Naive thymus-derived CD8-positive, alpha-beta T cell (primary cell): ENCODE measurements at regions of chr18 and their contacts with region 1.

Region 1: GRCh38 chr18:54269893-54270844 is 852 bp downstream of the POLI start:
- DNase-seq: peak in 6 of 10 donors; percentile 21 to 66 (median 36)
- ATAC-seq: peak; percentile 7 to 27
- H3K4me3 Mint-ChIP-seq: peak overlapping the region; percentile 87 to 97 (median 95)
- H3K27ac Mint-ChIP-seq: peak overlapping the region; percentile 94 to 99 (median 97)
- H3K4me1 Mint-ChIP-seq: peaks cover 7 to 34% (median 23%) of the 10 kb centered on the region in 4 donors
- H3K27me3 Mint-ChIP-seq: no peaks in the 10 kb centered on the region

Region 2: GRCh38 chr18:54224379-54225014 is 45.7 kb before region 1 on chr18 and contains the start of gene MBD2:
- POLR2A ChIA-PET with region 1: interaction called, 52 read pairs
- DNase-seq: peak; percentile 84 to 95 (median 92)
- ATAC-seq: peak; percentile 88 to 89
- H3K4me3 Mint-ChIP-seq: peak within 1 kb of the TSS; percentile 89 to 98 (median 94)
- H3K27ac Mint-ChIP-seq: peak within 1 kb of the TSS; percentile 92 to 98 (median 96)
- H3K4me1 Mint-ChIP-seq: peaks cover 8 to 42% (median 39%) of the 10 kb centered on the region in 4 donors
- H3K27me3 Mint-ChIP-seq: no peaks in the 10 kb centered on the region
- polyA plus RNA-seq, gene MBD2: 6.3 to 21.1 (median 13.0) TPM

Region 3: DNA sequence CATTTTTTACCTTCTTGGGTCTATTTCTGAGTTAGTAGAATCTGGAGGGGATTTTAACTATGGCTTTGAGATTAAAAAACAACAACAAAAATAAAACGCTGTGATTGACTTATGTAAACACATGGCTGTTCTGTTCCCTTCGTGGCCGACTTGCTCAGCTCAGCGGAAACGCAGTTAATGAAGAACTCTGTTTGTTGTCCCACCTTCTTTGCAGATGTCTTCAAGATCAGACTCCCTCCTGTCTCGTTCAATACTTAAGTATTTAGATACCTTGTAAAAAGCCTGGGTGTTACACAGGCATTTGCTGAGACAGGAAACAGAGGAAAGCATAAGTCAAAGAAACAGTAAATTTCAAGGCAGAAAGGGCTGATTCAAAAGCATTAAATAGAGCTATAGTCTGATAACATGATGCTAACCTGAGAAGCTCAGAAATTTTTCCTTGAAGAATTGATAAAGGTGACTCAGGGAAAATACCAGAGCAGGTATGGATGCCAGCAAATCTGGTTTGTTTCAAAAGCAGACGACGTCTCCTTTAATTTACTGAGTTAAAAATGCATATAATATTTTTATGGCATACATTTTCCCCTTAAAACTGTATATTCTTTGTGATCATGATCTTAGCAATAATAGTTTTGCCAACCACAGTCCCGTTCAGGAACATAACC is 22.5 kb before region 1 on chr18:
- POLR2A ChIA-PET with region 1: interaction called, 15 read pairs
- DNase-seq: no peak
- ATAC-seq: peak; percentile 39 to 48
- H3K4me3 Mint-ChIP-seq: peak overlapping the region; percentile 26 to 78 (median 52)
- H3K27ac Mint-ChIP-seq: peak overlapping the region; percentile 85 to 96 (median 92)
- H3K4me1 Mint-ChIP-seq: peaks cover 7 to 41% (median 15%) of the 10 kb centered on the region in 4 donors
- H3K27me3 Mint-ChIP-seq: no peaks in the 10 kb centered on the region

Region 4: GRCh38 chr18:54284981-54285785 is 15.0 kb after region 1 on chr18:
- POLR2A ChIA-PET with region 1: no interaction called
- DNase-seq: no peak
- ATAC-seq: no peak
- H3K4me3 Mint-ChIP-seq: no peak overlapping the region
- H3K27ac Mint-ChIP-seq: peak overlapping the region in 3 of 10 donors; percentile 2 to 51 (median 31)
- H3K4me1 Mint-ChIP-seq: peaks cover 0 to 2% (median under 1%) of the 10 kb centered on the region in 4 donors
- H3K27me3 Mint-ChIP-seq: no peaks in the 10 kb centered on the region

Region 5: DNA sequence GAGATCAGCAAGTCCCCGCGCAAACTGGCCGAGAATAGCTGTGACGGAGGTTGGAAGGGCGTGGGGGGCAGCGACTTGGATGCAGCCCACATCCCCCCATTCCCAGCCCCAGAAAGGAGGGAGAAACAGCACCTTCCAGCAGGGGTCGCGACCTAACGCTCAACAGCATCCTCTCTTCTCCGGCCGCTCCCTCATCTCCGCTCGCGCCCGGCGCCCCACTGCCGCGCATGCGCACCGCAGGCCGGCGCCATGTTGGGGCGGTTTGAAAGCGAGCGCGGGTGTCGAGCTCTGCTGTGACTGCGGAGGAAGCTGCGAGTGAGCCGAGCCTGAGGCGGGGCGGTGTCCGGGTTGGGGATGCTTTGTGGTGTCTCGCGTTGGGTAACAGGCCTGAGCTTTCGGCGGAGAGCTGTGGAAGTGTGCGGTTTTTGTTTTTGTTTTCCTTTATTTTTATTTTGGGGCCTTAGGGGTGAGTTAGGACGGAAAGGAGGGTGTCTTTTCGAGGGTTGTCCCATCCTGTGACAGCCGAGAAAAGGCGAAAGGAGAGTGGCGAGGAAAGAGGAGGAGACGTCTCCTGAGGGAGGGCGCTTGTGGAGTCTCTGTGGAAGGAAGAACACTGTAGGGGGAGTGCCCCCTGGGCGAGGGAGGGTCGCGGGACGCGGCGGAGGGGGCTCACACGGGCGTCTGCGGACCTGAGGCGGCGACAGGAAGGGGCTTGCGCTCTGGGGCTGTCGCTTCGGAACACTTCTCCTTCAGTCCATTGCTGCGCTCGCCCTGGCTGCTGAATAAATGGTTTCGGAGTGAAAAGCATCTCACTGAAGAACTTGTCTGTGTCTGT is 87.7 kb after region 1 on chr18 and contains the starts of genes C18orf54 and STARD6:
- POLR2A ChIA-PET with region 1: interaction called, 15 read pairs
- DNase-seq: peak; percentile 84 to 93 (median 88)
- ATAC-seq: peak; percentile 93 to 94
- H3K4me3 Mint-ChIP-seq: peak within 1 kb of the TSS; percentile 93 to 100 (median 99)
- H3K27ac Mint-ChIP-seq: peak within 1 kb of the TSS; percentile 86 to 99 (median 96)
- H3K4me1 Mint-ChIP-seq: peaks cover 9 to 21% (median 16%) of the 10 kb centered on the region in 4 donors
- H3K27me3 Mint-ChIP-seq: peaks cover 0 to 4% (median 0%) of the 10 kb centered on the region in 5 donors
- polyA plus RNA-seq, gene C18orf54: 0.98 to 1.3 (median 1.2) TPM
- polyA plus RNA-seq, gene STARD6: not detected